OCI-LY7 (cell line): ENCODE measurements at regions of chr1 and their contacts with region 1.

Region 1: DNA sequence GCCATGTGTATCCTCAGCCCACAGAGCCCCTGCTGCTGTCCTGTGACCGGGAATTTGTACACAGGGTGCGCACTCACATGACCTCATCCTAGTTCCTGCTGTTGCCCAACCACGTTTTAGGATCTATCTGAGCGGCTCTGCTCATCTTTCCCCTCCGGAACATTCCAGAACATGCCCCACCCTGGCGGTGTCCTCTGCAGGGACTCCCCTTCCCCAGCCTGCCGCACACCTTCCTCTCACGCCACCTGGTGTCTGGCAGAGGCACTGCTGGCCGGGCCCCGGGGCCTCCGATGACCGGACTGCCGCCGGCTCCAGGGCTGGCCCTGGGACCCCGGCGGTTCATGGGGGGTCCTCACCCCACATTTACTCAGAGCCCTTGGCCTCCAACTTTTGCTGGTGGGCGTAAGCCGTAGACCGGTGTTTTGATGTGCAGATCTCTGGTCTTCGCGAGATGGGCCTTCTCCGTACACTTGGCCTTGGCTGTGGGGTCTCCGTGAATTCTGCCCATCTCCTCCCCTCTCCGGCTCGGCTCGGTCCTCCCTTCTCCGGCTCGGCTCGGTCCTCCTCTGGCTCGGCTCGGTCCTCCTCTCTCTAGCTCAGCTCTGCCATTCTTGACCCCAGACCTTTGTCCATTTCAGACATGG is 29.5 kb downstream of the ARHGEF16 start:
- DNase-seq: peak; percentile 39
- H3K4me3 ChIP-seq: no peak overlapping the region
- H3K27ac ChIP-seq: no peak overlapping the region
- H3K4me1 ChIP-seq: no peaks in the 10 kb centered on the region
- CTCF ChIP-seq: peak; percentile 84

Region 2: GRCh38 chr1:3247521-3248121 is 236.3 kb before region 1 on chr1:
- CTCF ChIA-PET with region 1: no interaction called
- POLR2A ChIA-PET with region 1: no interaction called
- intact Hi-C with region 1: no loop called
- DNase-seq: no peak
- H3K4me3 ChIP-seq: no peak overlapping the region
- H3K27ac ChIP-seq: no peak overlapping the region
- H3K4me1 ChIP-seq: no peaks in the 10 kb centered on the region
- CTCF ChIP-seq: no peak

Region 3: GRCh38 chr1:3453203-3453761 is 30.6 kb before region 1 on chr1:
- CTCF ChIA-PET with region 1: interaction called, 3 read pairs
- POLR2A ChIA-PET with region 1: no interaction called
- intact Hi-C with region 1: loop called (anchors 2 kb)
- DNase-seq: peak; percentile 57
- H3K4me3 ChIP-seq: no peak overlapping the region
- H3K27ac ChIP-seq: no peak overlapping the region
- H3K4me1 ChIP-seq: no peaks in the 10 kb centered on the region
- CTCF ChIP-seq: peak; percentile 81